ENCODE measurements at regions of chr3 and their contacts with region 1.

Region 1: DNA sequence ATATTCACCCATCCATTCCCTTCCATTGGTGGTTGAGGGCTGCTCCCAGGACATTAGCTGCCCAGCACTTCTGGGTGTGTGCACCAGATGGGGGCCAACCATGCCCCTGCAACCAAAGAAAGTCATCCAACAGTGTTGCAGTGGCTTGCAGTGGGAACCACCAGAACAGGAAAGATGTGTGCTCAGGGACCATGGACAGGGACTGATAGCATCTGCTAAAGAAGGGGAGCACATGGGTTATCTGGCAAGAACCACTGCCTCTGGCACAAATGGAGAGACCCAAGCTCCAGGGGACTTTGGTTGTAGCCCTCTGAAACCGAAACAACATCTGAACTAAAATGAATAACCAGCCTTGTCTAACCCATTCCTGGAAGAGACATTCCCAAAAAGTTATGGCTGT is 8.1 kb downstream of the DCLK3 start:
- DNase-seq: no peak
- H3K4me3 ChIP-seq: no peak overlapping the region
- H3K27ac ChIP-seq: no peak overlapping the region
- H3K4me1 ChIP-seq: no peaks in the 10 kb centered on the region
- H3K27me3 ChIP-seq: peaks cover 4% of the 10 kb centered on the region
- CTCF ChIP-seq: no peak

Region 2: GRCh38 chr3:36597422-36597821 is 158.8 kb before region 1 on chr3:
- CTCF ChIA-PET with region 1: no interaction called
- dilution Hi-C with region 1: no loop called
- in situ Hi-C with region 1: no loop called
- intact Hi-C with region 1: no loop called
- DNase-seq: peak; percentile 66
- H3K4me3 ChIP-seq: no peak overlapping the region
- H3K27ac ChIP-seq: no peak overlapping the region
- H3K4me1 ChIP-seq: peaks cover 5% of the 10 kb centered on the region
- H3K27me3 ChIP-seq: no peaks in the 10 kb centered on the region
- CTCF ChIP-seq: no peak

Region 3: GRCh38 chr3:36714343-36715086 is 41.8 kb before region 1 on chr3:
- CTCF ChIA-PET with region 1: no interaction called
- dilution Hi-C with region 1: loop called (anchors 5 kb)
- in situ Hi-C with region 1: no loop called
- intact Hi-C with region 1: no loop called
- DNase-seq: no peak
- H3K4me3 ChIP-seq: no peak overlapping the region
- H3K27ac ChIP-seq: no peak overlapping the region
- H3K4me1 ChIP-seq: no peaks in the 10 kb centered on the region
- H3K27me3 ChIP-seq: peaks cover 2% of the 10 kb centered on the region
- CTCF ChIP-seq: peak; percentile 24 to 28

Region 4: DNA sequence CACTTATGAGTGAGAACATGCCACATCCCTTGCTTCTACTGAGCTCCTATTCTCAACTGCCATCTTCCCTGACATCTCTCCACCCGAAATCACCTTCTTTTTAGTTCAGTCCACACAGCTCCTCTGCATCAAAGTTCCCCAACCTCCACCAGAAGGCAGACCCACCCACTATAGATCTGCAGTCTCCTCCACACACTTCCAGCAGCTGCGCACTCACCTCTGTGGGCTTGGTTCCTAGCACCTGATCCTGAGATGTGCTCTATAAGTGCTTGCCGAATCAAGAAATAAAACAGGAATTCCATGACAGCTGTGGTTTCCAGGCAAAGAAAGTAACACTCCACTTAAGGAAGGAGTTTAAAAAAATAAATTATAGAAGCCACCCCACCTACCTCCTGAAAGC is 103.2 kb after region 1 on chr3:
- CTCF ChIA-PET with region 1: no interaction called
- dilution Hi-C with region 1: loop called (anchors 5 kb)
- in situ Hi-C with region 1: no loop called
- intact Hi-C with region 1: no loop called
- DNase-seq: no peak
- H3K4me3 ChIP-seq: no peak overlapping the region
- H3K27ac ChIP-seq: no peak overlapping the region
- H3K4me1 ChIP-seq: no peaks in the 10 kb centered on the region
- H3K27me3 ChIP-seq: peaks cover 6% of the 10 kb centered on the region
- CTCF ChIP-seq: no peak

Region 5: DNA sequence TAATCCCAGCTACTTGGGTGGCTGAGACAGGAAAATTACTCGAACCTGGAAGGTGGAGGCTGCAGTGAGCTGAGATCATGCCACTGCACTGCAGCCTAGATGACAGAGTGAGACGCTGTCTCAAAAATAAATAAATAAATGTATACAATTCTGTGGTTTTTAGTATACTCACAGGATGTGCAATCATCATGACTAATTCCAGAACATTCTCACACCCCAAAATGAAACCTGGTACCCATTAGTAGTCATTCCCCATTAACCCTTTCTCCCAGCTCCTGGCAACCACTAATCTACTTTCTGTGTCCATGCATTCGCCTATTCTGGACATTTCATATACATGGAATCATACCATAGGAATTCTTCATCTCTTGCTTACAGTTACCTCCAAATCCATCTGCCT is 373.6 kb after region 1 on chr3:
- CTCF ChIA-PET with region 1: no interaction called
- dilution Hi-C with region 1: no loop called
- in situ Hi-C with region 1: no loop called
- intact Hi-C with region 1: no loop called
- DNase-seq: peak; percentile 77
- H3K4me3 ChIP-seq: no peak overlapping the region
- H3K27ac ChIP-seq: peak overlapping the region; percentile 46
- H3K4me1 ChIP-seq: peaks cover 7% of the 10 kb centered on the region
- H3K27me3 ChIP-seq: no peaks in the 10 kb centered on the region
- CTCF ChIP-seq: no peak